ENCODE measurements at regions of chr9 and their contacts with region 1.

Region 1: DNA sequence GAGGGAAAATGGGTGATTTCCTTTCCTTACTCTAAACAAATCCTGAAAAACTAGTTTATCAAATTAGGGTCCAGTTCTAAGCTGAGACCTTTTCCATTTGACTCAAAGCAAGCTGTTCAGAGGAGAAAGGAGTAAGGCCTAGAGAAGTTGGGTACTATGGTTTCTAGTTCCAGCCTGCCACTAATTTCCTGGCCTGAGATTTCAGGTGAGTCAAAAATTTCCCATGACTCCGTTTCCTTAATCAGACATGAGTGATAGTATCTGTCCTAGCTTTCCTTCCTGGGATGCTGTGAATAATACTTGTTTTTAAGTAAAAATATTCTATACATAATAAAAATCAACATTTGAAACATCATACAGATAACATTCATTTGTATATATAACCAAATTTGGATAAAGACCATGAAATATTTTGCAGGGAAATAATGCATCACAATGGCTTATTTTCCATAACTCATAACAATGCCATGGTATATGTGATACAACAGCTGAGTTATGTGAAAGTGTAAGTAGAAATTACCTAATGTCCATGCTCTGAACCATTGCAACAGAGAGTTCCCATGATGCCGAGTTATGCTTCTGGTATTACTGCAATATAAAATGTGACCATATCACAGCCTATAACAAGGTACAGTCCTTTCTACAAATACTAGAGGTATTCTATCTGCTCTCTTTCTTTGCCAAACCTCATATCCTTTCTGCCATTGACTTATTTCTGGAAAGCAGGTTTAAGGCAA is 142.7 kb downstream of the MLLT3 start:
- DNase-seq: no peak
- ATAC-seq: no peak
- H3K4me3 ChIP-seq: no peak overlapping the region
- H3K27ac ChIP-seq: peak overlapping the region in 1 of 10 donors; percentile 19
- H3K4me1 ChIP-seq: peaks cover 0 to 40% (median 25%) of the 10 kb centered on the region in 9 donors
- H3K27me3 ChIP-seq: no peaks in the 10 kb centered on the region
- CTCF ChIP-seq: no peak

Region 2: GRCh38 chr9:20512106-20512505 is 32.5 kb after region 1 on chr9:
- intact Hi-C with region 1: loop called in 1 of 10 experiments (anchors 5 kb)
- DNase-seq: no peak
- ATAC-seq: peak in 1 of 8 donors; percentile 11
- H3K4me3 ChIP-seq: no peak overlapping the region
- H3K27ac ChIP-seq: peak overlapping the region in 6 of 10 donors; percentile 11 to 55 (median 26)
- H3K4me1 ChIP-seq: peaks cover 3 to 75% (median 29%) of the 10 kb centered on the region in 9 donors
- H3K27me3 ChIP-seq: no peaks in the 10 kb centered on the region
- CTCF ChIP-seq: no peak

Region 3: GRCh38 chr9:20552874-20553575 is 73.4 kb after region 1 on chr9:
- intact Hi-C with region 1: loop called in 1 of 10 experiments (anchors 5 kb)
- DNase-seq: no peak
- ATAC-seq: peak in 2 of 8 donors; percentile 26 to 37
- H3K4me3 ChIP-seq: no peak overlapping the region
- H3K27ac ChIP-seq: no peak overlapping the region
- H3K4me1 ChIP-seq: peaks cover 5 to 62% (median 29%) of the 10 kb centered on the region in 9 donors
- H3K27me3 ChIP-seq: no peaks in the 10 kb centered on the region
- CTCF ChIP-seq: peak in 8 of 9 donors; percentile 15 to 57 (median 34)

Measured in heart right ventricle (tissue), 16 donors.